CD4-positive, alpha-beta T cell (primary cell): ENCODE measurements at regions of chr1 and their contacts with region 1.

Region 1: DNA sequence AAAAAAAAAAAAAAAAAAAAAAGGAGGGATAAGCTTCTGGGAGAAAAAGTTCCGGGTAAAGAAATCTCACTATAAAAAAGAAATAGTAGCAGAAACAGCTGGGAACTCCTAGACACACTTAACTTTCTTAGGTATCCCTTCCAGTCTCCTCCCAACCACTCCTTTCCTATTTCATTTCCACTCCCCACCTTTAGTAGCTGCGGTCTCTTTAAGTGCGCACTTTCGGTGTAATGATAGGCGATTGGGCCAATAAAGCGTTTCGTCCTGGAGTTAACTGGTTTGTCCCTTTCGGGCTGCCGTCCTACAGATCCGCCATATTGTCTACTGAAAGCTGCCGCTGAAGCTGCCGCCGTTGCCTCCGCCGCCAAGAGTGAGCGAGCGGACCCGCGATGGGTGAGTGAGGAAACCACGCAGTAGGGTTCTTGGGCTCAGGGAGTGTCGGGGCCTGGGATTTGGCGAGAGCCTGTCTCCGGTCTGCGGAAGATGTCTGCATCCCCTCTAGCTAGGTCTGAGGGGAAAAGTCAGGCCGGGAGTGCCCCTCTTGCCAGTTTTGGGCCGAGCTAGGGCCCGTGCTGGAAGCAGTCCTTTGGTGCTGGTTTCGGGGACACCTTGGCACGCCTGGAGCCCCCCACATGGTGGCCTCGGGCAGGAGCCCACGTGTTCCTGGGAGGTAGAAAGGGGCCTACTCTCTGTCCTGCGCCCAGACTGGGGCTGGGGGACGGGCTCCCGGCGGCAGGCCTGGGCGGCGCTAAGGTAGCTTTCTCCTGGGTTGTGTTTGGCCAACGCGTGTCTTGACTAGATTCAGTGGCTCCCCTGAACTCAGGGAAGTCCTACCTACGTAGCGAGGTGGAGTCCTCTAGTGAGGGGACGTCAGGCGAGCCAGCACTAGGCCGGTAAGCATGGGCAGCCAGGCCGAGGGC is at the start of gene KPNA6:
- DNase-seq: peak; percentile 81 to 96 (median 88)
- ATAC-seq: peak; percentile 88
- H3K4me3 ChIP-seq: peak within 1 kb of the TSS; percentile 99
- H3K4me3 Mint-ChIP-seq: peak within 1 kb of the TSS; percentile 99
- H3K27ac ChIP-seq: peak within 1 kb of the TSS; percentile 92 to 96
- H3K27ac Mint-ChIP-seq: peak within 1 kb of the TSS; percentile 98
- H3K4me1 ChIP-seq: peaks cover 45% of the 10 kb centered on the region
- H3K4me1 Mint-ChIP-seq: peaks cover 53% of the 10 kb centered on the region
- H3K27me3 ChIP-seq: no peaks in the 10 kb centered on the region
- H3K27me3 Mint-ChIP-seq: no peaks in the 10 kb centered on the region
- CTCF ChIP-seq: no peak
- total RNA-seq, gene KPNA6: 47.1 to 47.8 TPM

Region 2: DNA sequence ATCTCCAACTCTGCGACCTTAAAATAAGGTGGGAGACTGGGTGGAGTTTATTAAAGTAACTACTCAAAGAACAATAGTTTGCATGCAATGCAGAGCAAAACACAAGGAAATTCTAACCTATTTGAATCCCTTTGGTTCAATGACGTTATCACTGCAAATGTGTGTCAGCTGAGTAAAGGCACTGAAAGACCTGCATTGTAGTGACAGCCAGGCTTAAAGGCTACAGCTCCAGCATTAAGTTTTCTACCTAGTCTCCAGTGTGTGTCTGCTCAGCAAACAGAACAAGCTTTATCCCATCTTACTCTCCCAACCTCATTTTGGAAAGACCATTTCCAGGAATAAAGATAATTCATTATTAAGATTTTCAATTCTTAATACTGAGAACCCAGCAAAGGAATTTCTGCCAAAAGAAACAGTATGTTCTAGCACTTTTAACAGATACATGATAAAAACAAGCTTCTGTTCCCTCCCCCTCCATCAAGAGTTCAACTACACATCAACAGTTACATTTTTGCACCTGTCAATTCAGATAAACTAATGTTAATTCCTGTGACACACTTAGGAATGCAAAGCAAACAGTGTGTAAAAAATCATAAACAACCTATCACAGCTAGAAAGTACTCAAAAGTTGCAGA is 184.0 kb before region 1 on chr1:
- CTCF ChIA-PET with region 1: no interaction called
- POLR2A ChIA-PET with region 1: no interaction called
- intact Hi-C with region 1: no loop called
- DNase-seq: peak in 2 of 14 experiments; percentile 38 to 56
- ATAC-seq: peak; percentile 56
- H3K4me3 ChIP-seq: no peak overlapping the region
- H3K4me3 Mint-ChIP-seq: peak overlapping the region; percentile 76
- H3K27ac ChIP-seq: no peak overlapping the region
- H3K27ac Mint-ChIP-seq: peak overlapping the region; percentile 90
- H3K4me1 ChIP-seq: peaks cover 59% of the 10 kb centered on the region
- H3K4me1 Mint-ChIP-seq: peaks cover 81% of the 10 kb centered on the region
- H3K27me3 ChIP-seq: no peaks in the 10 kb centered on the region
- H3K27me3 Mint-ChIP-seq: no peaks in the 10 kb centered on the region
- CTCF ChIP-seq: no peak

Region 3: DNA sequence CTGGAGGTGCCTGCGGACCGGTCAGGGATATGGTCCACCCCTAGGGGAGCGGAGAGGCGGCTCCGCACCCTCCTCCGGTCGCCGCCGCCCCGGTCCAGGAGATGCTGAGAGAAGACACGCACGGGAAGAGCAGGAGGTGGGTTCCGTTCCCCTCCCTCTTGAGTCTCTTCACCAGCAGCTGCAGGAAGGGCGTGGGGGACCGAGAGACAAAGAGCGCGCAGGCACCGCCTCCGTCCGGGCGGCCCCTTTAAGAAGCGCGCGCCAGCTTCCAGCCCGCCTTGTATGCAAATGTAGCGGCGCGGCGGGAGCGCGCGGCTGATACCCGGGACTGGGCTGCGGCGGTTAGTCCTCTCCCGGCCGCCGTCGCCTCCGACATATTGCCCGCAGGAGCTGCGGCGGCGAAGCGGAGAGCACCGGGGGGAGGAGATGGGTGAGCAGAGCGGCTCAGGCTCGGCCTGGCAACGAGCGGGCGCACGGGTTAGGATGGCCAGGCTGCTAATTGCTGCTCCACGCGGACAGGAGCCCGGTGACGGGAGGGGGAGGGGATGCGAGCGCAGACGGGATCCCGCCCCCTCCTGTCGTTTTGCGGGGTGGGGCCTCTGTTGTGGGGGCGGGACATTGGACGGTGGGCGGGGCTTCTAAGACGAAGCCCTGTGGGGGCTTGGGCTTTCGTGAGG is 35.2 kb before region 1 on chr1 and contains the start of gene TMEM39B:
- CTCF ChIA-PET with region 1: interaction called, 39 read pairs
- POLR2A ChIA-PET with region 1: interaction called, 71 read pairs
- intact Hi-C with region 1: loop called (anchors 1 to 2 kb)
- DNase-seq: peak; percentile 86 to 98 (median 92)
- ATAC-seq: peak; percentile 84
- H3K4me3 ChIP-seq: peak within 1 kb of the TSS; percentile 71
- H3K4me3 Mint-ChIP-seq: peak within 1 kb of the TSS; percentile 89
- H3K27ac ChIP-seq: peak within 1 kb of the TSS; percentile 50 to 68
- H3K27ac Mint-ChIP-seq: peak within 1 kb of the TSS; percentile 82
- H3K4me1 ChIP-seq: peaks cover 27% of the 10 kb centered on the region
- H3K4me1 Mint-ChIP-seq: peaks cover 39% of the 10 kb centered on the region
- H3K27me3 ChIP-seq: no peaks in the 10 kb centered on the region
- H3K27me3 Mint-ChIP-seq: no peaks in the 10 kb centered on the region
- CTCF ChIP-seq: no peak
- total RNA-seq, gene TMEM39B: 7.2 to 7.9 TPM

Region 4: DNA sequence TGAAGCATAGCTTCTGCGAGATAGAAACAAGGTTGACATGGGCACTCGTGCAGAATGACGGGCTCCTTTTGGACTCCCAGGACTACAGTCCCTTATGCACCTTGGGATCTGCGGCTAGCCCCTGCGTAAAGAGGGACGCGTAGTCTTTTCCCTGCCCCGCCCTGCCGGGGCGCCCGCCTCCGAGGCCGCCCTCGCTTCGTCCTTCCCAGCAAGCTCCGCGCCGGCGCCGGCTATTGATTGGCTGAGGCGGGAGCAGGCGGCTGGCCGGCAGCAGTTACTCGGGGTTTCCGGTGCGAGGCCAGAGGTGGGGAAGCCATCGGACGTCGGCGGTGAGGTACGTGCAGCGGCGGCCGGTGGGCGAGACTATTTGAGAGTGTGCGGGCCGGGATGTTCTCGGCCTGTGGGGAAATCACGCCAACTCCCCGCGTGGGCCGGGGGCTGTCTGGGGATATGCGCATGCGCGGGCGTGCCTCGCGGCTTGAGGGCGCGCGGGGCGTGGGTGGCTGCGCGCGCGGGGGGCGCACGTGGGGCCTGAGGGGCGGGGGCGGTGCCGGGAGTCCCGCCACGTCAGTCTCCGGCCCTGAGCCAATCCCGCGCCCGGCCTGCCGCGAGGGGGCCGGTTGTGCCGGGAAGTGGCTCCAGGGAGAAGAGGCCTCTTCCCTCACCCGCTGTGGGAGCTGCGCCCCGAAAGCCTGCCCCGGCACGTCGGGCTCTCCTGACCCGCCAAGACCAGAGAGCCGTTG is 71.6 kb after region 1 on chr1 and contains the start of gene TXLNA:
- CTCF ChIA-PET with region 1: interaction called, 4 read pairs
- POLR2A ChIA-PET with region 1: interaction called, 30 read pairs
- intact Hi-C with region 1: loop called in 1 of 2 experiments (anchors 1 kb)
- DNase-seq: peak; percentile 77 to 94 (median 84)
- ATAC-seq: peak; percentile 85
- H3K4me3 ChIP-seq: peak within 1 kb of the TSS; percentile 90
- H3K4me3 Mint-ChIP-seq: peak within 1 kb of the TSS; percentile 91
- H3K27ac ChIP-seq: peak within 1 kb of the TSS; percentile 77 to 93
- H3K27ac Mint-ChIP-seq: peak within 1 kb of the TSS; percentile 93
- H3K4me1 ChIP-seq: peaks cover 46% of the 10 kb centered on the region
- H3K4me1 Mint-ChIP-seq: peaks cover 49% of the 10 kb centered on the region
- H3K27me3 ChIP-seq: no peaks in the 10 kb centered on the region
- H3K27me3 Mint-ChIP-seq: no peaks in the 10 kb centered on the region
- CTCF ChIP-seq: no peak
- total RNA-seq, gene TXLNA: 6.3 to 6.4 TPM

Region 5: DNA sequence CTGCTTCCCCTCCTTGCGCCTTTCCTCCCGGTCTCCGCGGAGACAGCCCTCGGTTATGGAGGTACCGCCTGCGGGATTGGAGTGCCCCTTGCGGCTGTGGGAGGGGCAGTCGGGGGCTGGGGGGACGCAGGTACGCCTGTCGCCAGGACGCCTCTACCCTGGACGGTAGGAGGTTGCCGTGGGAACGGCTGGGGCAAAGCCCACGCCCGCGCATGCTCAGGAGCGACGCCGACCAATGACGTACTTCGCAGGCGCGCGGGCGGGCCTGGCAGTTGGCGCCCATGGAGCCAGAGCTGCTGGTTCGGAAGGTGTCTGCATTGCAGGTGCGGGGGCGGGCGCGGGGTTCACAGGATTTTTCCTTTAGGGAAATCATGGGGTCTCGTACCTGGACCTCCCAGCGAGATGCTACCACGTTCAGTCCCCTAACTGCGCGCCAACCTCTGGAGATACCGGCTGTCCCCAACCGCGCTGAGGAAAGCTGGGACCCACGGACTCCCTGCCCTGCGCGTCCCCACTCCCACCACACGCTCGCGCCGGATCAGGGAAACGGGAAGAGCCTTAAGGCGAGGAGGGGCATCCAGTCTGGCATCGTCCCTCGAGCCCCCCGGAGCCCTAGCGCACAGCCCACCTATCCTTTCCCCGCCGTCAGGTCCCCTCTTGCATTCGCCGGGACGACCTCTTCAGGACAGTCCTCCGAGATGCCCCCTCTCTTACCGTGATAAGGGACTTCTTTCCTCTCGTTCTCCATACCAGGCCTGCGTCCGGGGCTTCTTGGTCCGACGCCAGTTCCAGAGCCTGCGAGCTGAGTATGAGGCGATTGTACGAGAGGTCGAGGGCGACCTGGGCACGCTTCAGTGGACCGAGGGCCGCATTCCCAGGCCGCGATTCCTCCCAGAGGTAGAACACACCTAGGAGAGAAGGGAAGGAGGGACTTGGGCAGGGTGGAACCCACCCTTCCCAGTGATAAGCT is 97.7 kb after region 1 on chr1 and contains the start of gene IQCC:
- CTCF ChIA-PET with region 1: interaction called, 3 read pairs
- POLR2A ChIA-PET with region 1: interaction called, 17 read pairs
- intact Hi-C with region 1: loop called in 1 of 2 experiments (anchors 10 kb)
- DNase-seq: peak; percentile 72 to 95 (median 81)
- ATAC-seq: peak; percentile 59
- H3K4me3 ChIP-seq: peak within 1 kb of the TSS; percentile 90
- H3K4me3 Mint-ChIP-seq: peak within 1 kb of the TSS; percentile 91
- H3K27ac ChIP-seq: peak within 1 kb of the TSS; percentile 33 to 49
- H3K27ac Mint-ChIP-seq: peak within 1 kb of the TSS; percentile 87
- H3K4me1 ChIP-seq: peaks cover 55% of the 10 kb centered on the region
- H3K4me1 Mint-ChIP-seq: peaks cover 38% of the 10 kb centered on the region
- H3K27me3 ChIP-seq: no peaks in the 10 kb centered on the region
- H3K27me3 Mint-ChIP-seq: no peaks in the 10 kb centered on the region
- CTCF ChIP-seq: no peak
- total RNA-seq, gene IQCC: 2.4 to 3.2 TPM

Region 6: DNA sequence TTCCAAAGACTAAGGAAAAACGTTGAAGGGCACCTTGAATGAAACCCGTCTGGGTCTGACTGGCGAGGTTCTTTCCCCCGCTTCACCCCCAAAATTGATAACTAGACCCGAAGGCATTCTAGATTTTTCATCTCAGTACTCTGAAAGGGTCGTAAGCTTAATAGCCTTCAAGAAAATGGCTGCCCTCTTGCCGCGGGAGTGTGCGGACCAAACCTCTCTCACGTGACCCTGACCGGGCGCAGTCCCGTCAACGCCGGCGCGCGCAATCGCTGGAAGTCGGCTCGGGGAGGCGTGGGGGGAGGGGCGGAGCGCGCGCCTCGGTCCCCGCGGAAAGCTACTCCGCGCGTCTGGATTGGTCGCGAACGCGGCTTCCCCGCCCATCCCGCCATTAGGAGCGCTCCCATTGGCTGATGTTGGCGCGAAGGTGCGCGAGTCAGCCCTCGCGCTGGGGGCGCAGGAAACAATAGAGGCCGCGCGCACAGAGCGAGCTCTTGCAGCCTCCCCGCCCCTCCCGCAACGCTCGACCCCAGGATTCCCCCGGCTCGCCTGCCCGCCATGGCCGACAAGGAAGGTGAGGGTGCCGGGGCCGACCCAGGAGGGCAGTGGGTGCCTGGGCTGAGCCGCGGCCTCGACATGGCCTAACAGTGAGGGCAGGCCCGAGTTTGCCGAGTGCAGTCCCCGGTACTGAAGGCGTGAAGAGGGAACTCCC is 542.9 kb after region 1 on chr1 and contains the start of gene RBBP4:
- CTCF ChIA-PET with region 1: no interaction called
- POLR2A ChIA-PET with region 1: interaction called, 13 read pairs
- intact Hi-C with region 1: no loop called
- DNase-seq: peak; percentile 94 to 99 (median 98)
- ATAC-seq: peak; percentile 79
- H3K4me3 ChIP-seq: peak within 1 kb of the TSS; percentile 80
- H3K4me3 Mint-ChIP-seq: peak within 1 kb of the TSS; percentile 94
- H3K27ac ChIP-seq: peak within 1 kb of the TSS; percentile 98 to 99
- H3K27ac Mint-ChIP-seq: peak within 1 kb of the TSS; percentile 95
- H3K4me1 ChIP-seq: peaks cover 58% of the 10 kb centered on the region
- H3K4me1 Mint-ChIP-seq: peaks cover 66% of the 10 kb centered on the region
- H3K27me3 ChIP-seq: no peaks in the 10 kb centered on the region
- H3K27me3 Mint-ChIP-seq: no peaks in the 10 kb centered on the region
- CTCF ChIP-seq: no peak
- total RNA-seq, gene RBBP4: 108 to 117 TPM